ENCODE measurements at regions of chr9 and their contacts with region 1.

Region 1: DNA sequence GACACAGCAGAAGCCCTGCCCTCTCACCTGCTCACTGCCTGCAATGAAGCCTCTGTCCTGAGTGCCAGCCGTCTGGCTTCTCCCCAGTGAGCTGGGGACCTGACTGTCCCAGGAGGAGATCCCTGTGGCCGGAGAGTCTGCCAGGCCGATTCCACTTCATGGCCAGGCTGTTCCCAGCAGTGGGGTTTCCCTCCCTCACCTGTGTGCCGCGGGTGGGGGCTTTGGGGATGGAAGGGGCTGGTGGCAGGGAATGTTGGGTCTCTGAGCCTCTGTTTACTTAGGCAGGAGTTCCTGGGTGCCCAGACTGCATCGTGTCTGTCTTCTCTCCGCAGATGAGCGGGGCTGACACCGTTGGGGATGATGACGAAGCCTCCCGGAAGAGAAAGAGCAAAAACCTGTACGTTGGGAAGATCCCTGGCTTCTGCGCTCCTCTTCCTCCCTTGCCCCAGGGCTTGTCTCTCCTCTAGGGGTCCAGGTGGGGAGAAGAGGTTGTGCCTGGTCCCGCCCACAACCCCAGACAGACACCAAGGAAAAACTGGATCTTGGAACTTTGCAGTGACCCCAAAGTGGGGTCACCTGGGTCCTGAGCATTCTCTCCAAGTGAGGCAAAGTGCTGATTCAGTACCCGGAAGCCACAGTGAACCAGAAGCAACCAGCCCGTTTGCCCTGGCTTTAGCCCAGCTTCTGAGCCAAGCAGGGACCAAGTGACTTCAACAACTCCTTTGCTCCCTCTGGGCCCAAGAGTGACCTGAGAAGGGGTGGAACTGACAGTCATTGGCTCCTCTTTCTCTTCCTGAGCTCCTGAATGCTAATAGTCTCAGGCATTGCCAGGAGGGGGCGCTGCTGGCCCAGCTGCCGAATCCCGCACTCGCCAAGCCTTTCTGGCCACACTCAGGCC is 127.7 kb downstream of the RGS3 start:
- DNase-seq: peak; percentile 79
- H3K4me3 ChIP-seq: no peak overlapping the region
- H3K27ac ChIP-seq: peak overlapping the region; percentile 51
- H3K4me1 ChIP-seq: peaks cover 68% of the 10 kb centered on the region
- H3K27me3 ChIP-seq: no peaks in the 10 kb centered on the region
- CTCF ChIP-seq: peak; percentile 90 to 91
- POLR2A ChIP-seq: no peak

Region 2: GRCh38 chr9:113446323-113446740 is 144.9 kb before region 1 on chr9:
- CTCF ChIA-PET with region 1: interaction called, 150 read pairs
- POLR2A ChIA-PET with region 1: no interaction called
- dilution Hi-C with region 1: no loop called
- intact Hi-C with region 1: loop called (anchors 2 kb)
- DNase-seq: peak; percentile 79
- H3K4me3 ChIP-seq: no peak overlapping the region
- H3K27ac ChIP-seq: no peak overlapping the region
- H3K4me1 ChIP-seq: peaks cover 4% of the 10 kb centered on the region
- H3K27me3 ChIP-seq: no peaks in the 10 kb centered on the region
- CTCF ChIP-seq: peak; percentile 28 to 35
- POLR2A ChIP-seq: no peak

Region 3: GRCh38 chr9:113533335-113534225 is 57.7 kb before region 1 on chr9:
- CTCF ChIA-PET with region 1: interaction called, 10 read pairs
- POLR2A ChIA-PET with region 1: no interaction called
- dilution Hi-C with region 1: no loop called
- intact Hi-C with region 1: no loop called
- DNase-seq: no peak
- H3K4me3 ChIP-seq: no peak overlapping the region
- H3K27ac ChIP-seq: no peak overlapping the region
- H3K4me1 ChIP-seq: no peaks in the 10 kb centered on the region
- H3K27me3 ChIP-seq: no peaks in the 10 kb centered on the region
- CTCF ChIP-seq: no peak
- POLR2A ChIP-seq: no peak

Region 4: DNA sequence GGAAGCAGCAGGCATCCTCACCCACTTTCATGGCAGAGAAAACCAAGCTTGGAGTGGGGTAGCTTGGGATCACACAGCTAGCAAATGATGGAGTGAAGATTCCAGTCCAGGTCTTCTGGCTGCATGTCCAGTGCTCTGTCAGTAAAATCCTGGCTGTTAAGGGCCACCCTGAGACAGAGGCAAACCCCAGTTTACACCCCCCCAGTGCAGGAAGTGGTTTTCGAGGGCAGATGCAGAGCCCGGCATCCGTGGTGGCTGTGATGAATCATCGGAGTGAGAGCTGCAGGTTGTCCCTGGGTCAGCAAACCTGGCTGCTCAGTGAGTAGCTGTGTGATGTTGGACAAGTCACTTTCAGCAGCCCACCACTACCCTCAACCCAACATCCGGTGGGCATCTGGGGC is 12.4 kb before region 1 on chr9:
- CTCF ChIA-PET with region 1: interaction called, 27 read pairs
- POLR2A ChIA-PET with region 1: interaction called, 6 read pairs
- dilution Hi-C with region 1: no loop called
- intact Hi-C with region 1: no loop called
- DNase-seq: peak; percentile 49
- H3K4me3 ChIP-seq: no peak overlapping the region
- H3K27ac ChIP-seq: peak overlapping the region; percentile 39
- H3K4me1 ChIP-seq: peaks cover 48% of the 10 kb centered on the region
- H3K27me3 ChIP-seq: no peaks in the 10 kb centered on the region
- CTCF ChIP-seq: no peak
- POLR2A ChIP-seq: no peak

Region 5: GRCh38 chr9:113632776-113633590 is 41.7 kb after region 1 on chr9:
- CTCF ChIA-PET with region 1: interaction called, 15 read pairs
- POLR2A ChIA-PET with region 1: interaction called, 8 read pairs
- dilution Hi-C with region 1: no loop called
- intact Hi-C with region 1: loop called (anchors 1 kb)
- DNase-seq: no peak
- H3K4me3 ChIP-seq: no peak overlapping the region
- H3K27ac ChIP-seq: no peak overlapping the region
- H3K4me1 ChIP-seq: peaks cover 22% of the 10 kb centered on the region
- H3K27me3 ChIP-seq: no peaks in the 10 kb centered on the region
- CTCF ChIP-seq: no peak
- POLR2A ChIP-seq: no peak

Region 6: GRCh38 chr9:113675475-113675941 is 84.3 kb after region 1 on chr9:
- CTCF ChIA-PET with region 1: interaction called, 14 read pairs
- POLR2A ChIA-PET with region 1: interaction called, 3 read pairs
- dilution Hi-C with region 1: no loop called
- intact Hi-C with region 1: no loop called
- DNase-seq: peak; percentile 99
- H3K4me3 ChIP-seq: no peak overlapping the region
- H3K27ac ChIP-seq: peak overlapping the region; percentile 83
- H3K4me1 ChIP-seq: peaks cover 30% of the 10 kb centered on the region
- H3K27me3 ChIP-seq: no peaks in the 10 kb centered on the region
- CTCF ChIP-seq: no peak
- POLR2A ChIP-seq: peak; percentile 64